CD4-positive, alpha-beta memory T cell (primary cell): ENCODE measurements at regions of chr3 and their contacts with region 1.

Region 1: DNA sequence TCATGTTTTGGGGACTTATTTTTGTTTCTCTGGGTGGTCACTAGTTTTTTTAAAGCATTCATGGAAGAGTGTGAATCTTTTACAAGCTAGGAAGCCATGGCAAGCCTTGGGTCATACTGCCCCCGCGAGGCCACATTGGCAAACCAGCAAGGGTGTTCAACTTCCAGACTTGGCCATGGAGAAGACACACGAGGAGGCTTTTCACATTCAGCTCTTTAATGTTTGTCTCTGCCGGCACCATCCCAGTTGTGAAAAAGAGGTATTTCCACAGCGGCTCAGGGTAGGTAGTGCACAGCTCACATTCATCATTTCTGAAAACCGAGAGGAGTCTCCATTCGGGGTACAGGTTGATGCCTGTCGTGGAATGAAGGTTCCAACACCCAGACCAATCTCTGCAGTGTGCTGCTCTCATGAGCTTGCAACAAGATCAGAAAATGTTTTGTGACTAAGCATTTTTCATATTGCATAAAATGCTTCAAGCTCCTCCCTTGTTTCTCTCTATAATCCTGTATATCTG is 7.7 kb downstream of the CCR5 start:
- DNase-seq: peak; percentile 49 to 55 (median 49)
- H3K4me3 ChIP-seq: no peak overlapping the region
- H3K4me3 Mint-ChIP-seq: peak overlapping the region in 1 of 8 donors; percentile 9
- H3K27ac ChIP-seq: no peak overlapping the region
- H3K27ac Mint-ChIP-seq: peak overlapping the region in 4 of 7 donors; percentile 17 to 55 (median 34)
- H3K4me1 ChIP-seq: peaks cover 52% of the 10 kb centered on the region
- H3K4me1 Mint-ChIP-seq: peaks cover 36 to 74% (median 53%) of the 10 kb centered on the region in 4 donors
- H3K27me3 ChIP-seq: no peaks in the 10 kb centered on the region
- H3K27me3 Mint-ChIP-seq: no peaks in the 10 kb centered on the region

Region 2: GRCh38 chr3:45760878-45761711 is 617.4 kb before region 1 on chr3:
- CTCF ChIA-PET with region 1: no interaction called
- POLR2A ChIA-PET with region 1: no interaction called
- intact Hi-C with region 1: loop called (anchors 10 kb)
- DNase-seq: peak in 4 of 5 donors; percentile 30 to 43 (median 34)
- H3K4me3 ChIP-seq: no peak overlapping the region
- H3K4me3 Mint-ChIP-seq: no peak overlapping the region
- H3K27ac ChIP-seq: no peak overlapping the region
- H3K27ac Mint-ChIP-seq: peak overlapping the region in 1 of 7 donors; percentile 8
- H3K4me1 ChIP-seq: no peaks in the 10 kb centered on the region
- H3K4me1 Mint-ChIP-seq: peaks cover 0 to 4% (median 3%) of the 10 kb centered on the region in 4 donors
- H3K27me3 ChIP-seq: no peaks in the 10 kb centered on the region
- H3K27me3 Mint-ChIP-seq: peaks cover 0 to 4% of the 10 kb centered on the region in 2 donors

Region 3: GRCh38 chr3:46266598-46266997 is 111.9 kb before region 1 on chr3:
- CTCF ChIA-PET with region 1: interaction called, 14 read pairs
- POLR2A ChIA-PET with region 1: interaction called, 3 read pairs
- intact Hi-C with region 1: no loop called
- DNase-seq: no peak
- H3K4me3 ChIP-seq: no peak overlapping the region
- H3K4me3 Mint-ChIP-seq: no peak overlapping the region
- H3K27ac ChIP-seq: no peak overlapping the region
- H3K27ac Mint-ChIP-seq: no peak overlapping the region
- H3K4me1 ChIP-seq: peaks cover 30% of the 10 kb centered on the region
- H3K4me1 Mint-ChIP-seq: peaks cover 14 to 44% (median 32%) of the 10 kb centered on the region in 4 donors
- H3K27me3 ChIP-seq: no peaks in the 10 kb centered on the region
- H3K27me3 Mint-ChIP-seq: no peaks in the 10 kb centered on the region

Region 4: GRCh38 chr3:46406788-46407611 is 28.5 kb after region 1 on chr3 and contains the starts of genes CCR5AS and CCRL2:
- CTCF ChIA-PET with region 1: interaction called, 13 read pairs
- POLR2A ChIA-PET with region 1: no interaction called
- intact Hi-C with region 1: no loop called
- DNase-seq: peak; percentile 15 to 62 (median 32)
- H3K4me3 ChIP-seq: peak within 1 kb of the TSS in 1 of 2 donors; percentile 27
- H3K4me3 Mint-ChIP-seq: peak within 1 kb of the TSS; percentile 68 to 85 (median 78)
- H3K27ac ChIP-seq: no peak within 1 kb of the TSS
- H3K27ac Mint-ChIP-seq: peak within 1 kb of the TSS; percentile 53 to 90 (median 84)
- H3K4me1 ChIP-seq: peaks cover 18% of the 10 kb centered on the region
- H3K4me1 Mint-ChIP-seq: peaks cover 3 to 18% (median 12%) of the 10 kb centered on the region in 4 donors
- H3K27me3 ChIP-seq: no peaks in the 10 kb centered on the region
- H3K27me3 Mint-ChIP-seq: peaks cover 2 to 7% of the 10 kb centered on the region in 2 donors
- total RNA-seq, gene CCRL2: 0.58 to 1.8 TPM